Posterior cingulate gyrus (tissue), 11 donors: ENCODE measurements at regions of chr11 and their contacts with region 1.

Region 1: DNA sequence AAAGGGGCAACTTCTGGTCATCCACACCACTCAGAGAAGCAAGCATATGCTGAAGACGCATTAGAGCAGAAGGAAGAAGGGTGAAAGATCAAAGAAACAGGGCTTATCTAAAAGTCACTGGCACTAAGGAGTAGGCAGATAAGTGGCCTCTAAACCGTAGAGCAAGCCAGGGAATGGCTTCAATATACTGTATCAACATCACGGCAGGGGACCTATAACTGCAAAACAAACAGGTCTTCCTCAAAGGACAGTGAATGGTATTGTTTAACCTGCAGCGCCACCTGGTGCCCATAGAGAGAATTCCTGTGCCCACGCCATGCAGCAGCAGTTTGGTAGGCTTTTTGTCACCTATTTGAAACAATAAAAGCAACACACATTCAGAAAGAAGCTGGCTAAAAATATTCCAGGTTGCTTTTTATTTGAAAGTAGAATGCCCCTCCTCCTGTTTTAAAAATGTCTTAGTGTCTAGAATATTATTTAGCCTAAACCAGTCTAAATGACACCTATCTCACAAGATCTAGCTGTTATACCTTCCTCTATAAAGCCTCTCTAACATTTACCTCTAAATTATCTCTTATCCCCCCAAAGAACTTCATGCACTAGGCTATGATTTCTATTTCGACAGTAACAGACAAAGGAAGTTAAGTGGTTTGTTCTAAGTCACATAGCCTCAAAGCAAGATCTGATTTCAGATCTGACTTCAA is 21.8 kb downstream of the SNX19 start:
- DNase-seq: peak; percentile 51 to 96 (median 82)

Region 2: GRCh38 chr11:130861902-130862860 is 32.3 kb before region 1 on chr11:
- intact Hi-C with region 1: loop called (anchors 1 kb)
- DNase-seq: peak; percentile 82 to 98 (median 92)